ENCODE measurements at regions of chr2 and their contacts with region 1.

Region 1: DNA sequence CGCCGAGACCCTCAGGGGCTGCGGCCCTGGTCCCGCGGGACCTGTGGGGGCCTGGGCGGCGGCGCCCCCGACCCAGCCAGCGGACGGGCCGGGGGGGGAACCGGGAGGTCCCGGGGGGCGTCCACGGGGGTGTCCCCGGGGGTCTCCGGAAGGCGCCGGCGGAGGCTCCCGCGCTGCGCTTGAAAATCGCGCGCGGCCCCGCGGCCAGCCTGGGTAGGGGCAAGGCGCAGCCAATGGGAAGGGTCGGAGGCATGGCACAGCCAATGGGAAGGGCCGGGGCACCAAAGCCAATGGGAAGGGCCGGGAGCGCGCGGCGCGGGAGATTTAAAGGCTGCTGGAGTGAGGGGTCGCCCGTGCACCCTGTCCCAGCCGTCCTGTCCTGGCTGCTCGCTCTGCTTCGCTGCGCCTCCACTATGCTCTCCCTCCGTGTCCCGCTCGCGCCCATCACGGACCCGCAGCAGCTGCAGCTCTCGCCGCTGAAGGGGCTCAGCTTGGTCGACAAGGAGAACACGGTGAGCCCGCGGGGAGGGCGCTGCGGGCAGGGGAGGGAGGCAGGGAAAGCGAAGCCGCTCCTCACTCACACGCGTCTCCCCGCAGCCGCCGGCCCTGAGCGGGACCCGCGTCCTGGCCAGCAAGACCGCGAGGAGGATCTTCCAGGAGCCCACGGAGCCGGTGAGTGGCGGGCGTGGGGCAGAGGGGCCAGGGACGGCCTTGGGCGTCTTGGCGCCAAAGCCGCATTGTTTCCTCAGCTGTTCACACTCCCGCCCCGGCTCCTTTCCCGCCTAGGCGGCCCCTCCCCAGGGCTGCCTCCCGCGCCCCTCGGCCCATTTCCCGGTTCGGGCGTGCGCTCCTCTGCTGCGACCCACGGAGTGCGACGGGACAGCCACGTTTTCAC is at the start of gene RRM2:
- DNase-seq: peak; percentile 98
- H3K4me3 Mint-ChIP-seq: peak within 1 kb of the TSS; percentile 99
- H3K27ac Mint-ChIP-seq: peak within 1 kb of the TSS; percentile 99
- H3K4me1 Mint-ChIP-seq: peaks cover 27% of the 10 kb centered on the region
- H3K27me3 Mint-ChIP-seq: no peaks in the 10 kb centered on the region
- total RNA-seq, gene RRM2: 466 to 514 TPM

Region 2: GRCh38 chr2:9778012-9778411 is 344.6 kb before region 1 on chr2:
- CTCF ChIA-PET with region 1: no interaction called
- intact Hi-C with region 1: loop called (anchors 1 kb)
- DNase-seq: peak; percentile 42
- H3K4me3 Mint-ChIP-seq: no peak overlapping the region
- H3K27ac Mint-ChIP-seq: no peak overlapping the region
- H3K4me1 Mint-ChIP-seq: peaks cover 40% of the 10 kb centered on the region
- H3K27me3 Mint-ChIP-seq: no peaks in the 10 kb centered on the region

Region 3: DNA sequence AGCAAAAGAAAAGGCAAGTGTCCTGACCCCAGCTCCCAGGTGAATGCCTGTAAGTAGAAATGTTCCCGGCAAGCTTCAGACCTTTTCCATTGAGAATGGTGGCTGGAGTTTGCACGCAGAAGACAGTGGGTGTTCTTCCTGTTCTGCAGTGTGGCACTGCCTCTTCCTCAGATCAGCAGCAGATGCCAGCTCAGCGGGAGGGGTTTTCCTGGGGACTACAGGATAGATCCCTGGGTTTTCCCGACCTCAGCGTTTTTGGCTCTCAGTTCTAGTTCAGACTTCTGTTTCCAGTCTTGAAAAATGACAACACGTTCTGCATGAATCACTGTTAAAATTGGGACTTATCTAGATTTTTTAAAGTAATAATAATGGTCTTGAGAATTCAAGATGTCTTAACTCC is 131.9 kb before region 1 on chr2:
- CTCF ChIA-PET with region 1: no interaction called
- intact Hi-C with region 1: loop called (anchors 5 kb)
- DNase-seq: peak; percentile 33
- H3K4me3 Mint-ChIP-seq: no peak overlapping the region
- H3K27ac Mint-ChIP-seq: no peak overlapping the region
- H3K4me1 Mint-ChIP-seq: peaks cover 13% of the 10 kb centered on the region
- H3K27me3 Mint-ChIP-seq: no peaks in the 10 kb centered on the region

Region 4: DNA sequence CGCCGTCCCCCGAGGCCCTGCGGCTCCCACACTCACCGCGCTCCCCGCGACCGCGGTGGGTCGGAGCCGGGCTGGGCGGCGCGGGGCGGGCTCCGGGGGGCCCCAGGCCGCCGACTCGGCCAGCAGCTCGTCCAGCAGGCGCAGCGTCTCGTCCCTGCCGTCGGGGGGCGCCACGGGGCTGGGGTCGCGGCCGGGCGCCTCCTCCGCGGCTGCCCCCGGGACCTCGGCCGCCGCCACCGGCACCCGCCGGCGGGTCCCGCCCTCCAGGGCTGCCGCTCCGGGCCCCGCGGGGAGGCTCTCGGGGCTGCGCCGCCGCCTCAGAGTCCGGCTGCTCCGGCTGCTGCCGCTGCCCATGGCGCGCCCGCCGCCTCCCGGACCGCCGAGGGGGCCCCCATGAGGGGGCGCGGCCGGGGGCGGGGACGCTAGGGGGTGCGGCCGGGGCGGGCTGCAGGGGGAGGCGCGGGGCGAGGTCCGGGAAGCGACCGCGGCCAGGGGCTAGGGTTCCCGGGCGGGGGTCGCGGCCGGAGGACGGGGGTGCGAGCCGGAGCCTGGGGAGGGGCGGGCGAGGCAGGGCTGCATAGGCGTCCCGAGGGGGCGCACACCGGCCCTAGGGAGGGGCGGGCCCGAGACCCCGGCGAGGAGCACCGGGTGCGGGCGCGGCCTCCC is 42.6 kb before region 1 on chr2 and contains the start of gene CYS1:
- CTCF ChIA-PET with region 1: interaction called, 33 read pairs
- intact Hi-C with region 1: loop called (anchors 2 kb)
- DNase-seq: no peak
- H3K4me3 Mint-ChIP-seq: peak within 1 kb of the TSS; percentile 68
- H3K27ac Mint-ChIP-seq: no peak within 1 kb of the TSS
- H3K4me1 Mint-ChIP-seq: peaks cover 10% of the 10 kb centered on the region
- H3K27me3 Mint-ChIP-seq: peaks cover 79% of the 10 kb centered on the region
- total RNA-seq, gene CYS1: not detected

Region 5: GRCh38 chr2:10408649-10409579 is 286.3 kb after region 1 on chr2:
- CTCF ChIA-PET with region 1: interaction called, 12 read pairs
- intact Hi-C with region 1: loop called (anchors 1 kb)
- DNase-seq: peak; percentile 89
- H3K4me3 Mint-ChIP-seq: peak overlapping the region; percentile 59
- H3K27ac Mint-ChIP-seq: peak overlapping the region; percentile 97
- H3K4me1 Mint-ChIP-seq: peaks cover 46% of the 10 kb centered on the region
- H3K27me3 Mint-ChIP-seq: no peaks in the 10 kb centered on the region

Region 6: DNA sequence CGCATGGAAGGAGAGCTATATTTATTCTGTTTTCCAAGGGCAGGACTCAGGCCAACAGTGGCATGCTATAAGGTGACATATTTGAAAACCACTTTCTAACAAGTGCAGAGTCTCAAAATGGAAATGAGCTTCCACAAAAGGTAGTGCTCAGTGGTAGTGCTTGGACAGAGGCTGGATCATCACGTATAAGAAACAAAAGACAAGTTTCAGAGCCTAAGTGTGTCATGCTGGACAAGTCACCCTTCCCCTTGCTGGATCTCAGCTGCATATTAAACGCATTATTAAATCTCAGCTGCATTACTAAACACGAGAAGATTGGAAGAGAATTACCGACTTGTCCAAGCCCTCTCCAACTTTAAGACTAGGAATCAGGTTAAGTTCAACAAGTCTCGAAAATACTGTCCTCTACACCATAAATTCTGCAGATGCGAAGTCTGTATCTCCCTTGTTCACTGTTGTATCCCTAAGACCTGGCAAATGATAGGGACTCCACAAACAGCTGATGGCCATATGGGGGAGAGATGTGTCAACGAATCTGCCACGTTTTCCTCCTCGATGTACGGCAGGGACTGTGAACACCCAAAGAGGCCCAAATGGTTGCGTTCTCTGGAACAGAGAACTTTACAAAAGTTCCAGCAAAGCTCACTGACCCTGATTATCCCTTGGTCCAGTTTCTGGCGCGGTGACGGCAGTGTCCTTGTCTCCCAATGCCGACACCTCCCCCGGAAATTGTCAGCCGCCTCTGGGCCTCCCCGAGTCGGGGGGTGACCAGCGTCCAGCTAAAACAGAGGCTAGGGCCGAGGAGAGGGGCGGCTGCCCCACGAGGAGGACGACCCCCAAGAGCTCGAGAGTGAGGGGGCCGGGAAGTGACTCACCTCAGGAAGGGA is 566.5 kb after region 1 on chr2:
- CTCF ChIA-PET with region 1: no interaction called
- intact Hi-C with region 1: loop called (anchors 2 kb)
- DNase-seq: peak; percentile 28
- H3K4me3 Mint-ChIP-seq: no peak overlapping the region
- H3K27ac Mint-ChIP-seq: no peak overlapping the region
- H3K4me1 Mint-ChIP-seq: peaks cover 8% of the 10 kb centered on the region
- H3K27me3 Mint-ChIP-seq: no peaks in the 10 kb centered on the region

Measured in activated naive CD4-positive, alpha-beta T cell treated with anti-CD3 and anti-CD28 coated beads for 36 hours (primary cell).